ENCODE measurements at regions of chr9 and their contacts with region 1.

Region 1: DNA sequence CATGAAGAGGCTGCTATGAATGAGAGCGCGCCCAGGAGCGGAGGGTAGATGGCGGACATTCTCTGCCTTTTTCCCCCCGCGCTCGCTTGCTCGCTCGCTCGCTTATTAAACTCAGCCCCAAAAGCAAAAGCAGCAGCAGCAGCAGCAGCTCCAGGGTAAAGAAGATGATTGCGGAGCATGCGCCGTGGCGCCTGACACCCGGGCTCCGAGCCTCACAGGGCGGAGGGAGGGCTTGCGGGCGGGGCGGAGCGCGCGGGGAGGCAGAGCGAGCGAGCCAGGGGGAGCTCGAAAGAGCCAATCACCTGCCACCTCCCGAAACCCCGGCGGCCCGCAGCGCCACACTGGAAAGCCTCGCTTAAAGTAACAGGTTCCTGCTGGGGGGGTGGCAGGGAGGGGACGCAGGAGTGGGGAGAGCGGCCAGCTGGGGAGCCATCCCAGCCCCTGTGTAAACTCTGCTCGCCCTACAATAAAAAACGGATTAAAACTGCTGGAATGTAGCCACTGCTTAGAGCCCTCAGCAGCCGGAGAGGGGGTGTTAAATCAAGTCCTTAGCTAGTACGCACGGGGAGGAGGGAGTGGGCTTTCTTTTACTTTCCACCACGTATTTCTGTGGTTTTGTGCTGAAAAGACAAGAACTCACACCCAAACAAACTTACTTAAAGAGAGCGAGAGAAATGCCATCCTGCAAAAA is at the start of gene MLLT3:
- DNase-seq: peak; percentile 96
- H3K4me3 Mint-ChIP-seq: peak within 1 kb of the TSS; percentile 92
- H3K27ac Mint-ChIP-seq: peak within 1 kb of the TSS; percentile 94
- H3K4me1 Mint-ChIP-seq: peaks cover 43% of the 10 kb centered on the region
- H3K27me3 Mint-ChIP-seq: no peaks in the 10 kb centered on the region
- total RNA-seq, gene MLLT3: 22.4 and 24.9 TPM in 2 replicates

Region 2: GRCh38 chr9:19925817-19926503 is 696.5 kb before region 1 on chr9:
- intact Hi-C with region 1: loop called (anchors 2 kb)
- DNase-seq: peak; percentile 74
- H3K4me3 Mint-ChIP-seq: peak overlapping the region; percentile 64
- H3K27ac Mint-ChIP-seq: no peak overlapping the region
- H3K4me1 Mint-ChIP-seq: peaks cover 14% of the 10 kb centered on the region
- H3K27me3 Mint-ChIP-seq: peaks cover 24% of the 10 kb centered on the region

Region 3: DNA sequence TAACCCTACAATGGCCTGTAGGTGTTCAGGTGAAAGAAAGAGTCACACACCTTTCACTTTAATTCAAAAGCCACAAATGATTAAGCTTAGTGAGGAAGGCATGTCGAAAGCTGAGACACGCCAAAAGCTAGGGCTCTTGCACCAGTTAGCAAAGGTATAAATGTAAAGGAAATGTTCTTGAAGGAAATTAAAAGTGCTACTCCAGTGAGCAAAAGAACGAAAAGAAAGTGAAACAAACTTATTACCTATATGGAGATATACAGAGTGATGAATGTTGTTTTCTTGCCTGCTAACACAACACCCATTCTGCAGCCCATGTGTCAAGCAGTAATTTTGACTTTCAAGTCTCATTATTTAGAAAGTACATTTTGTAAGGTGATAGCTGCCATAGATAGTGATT is 579.4 kb before region 1 on chr9:
- intact Hi-C with region 1: loop called (anchors 2 kb)
- DNase-seq: no peak
- H3K4me3 Mint-ChIP-seq: peak overlapping the region; percentile 71
- H3K27ac Mint-ChIP-seq: peak overlapping the region; percentile 70
- H3K4me1 Mint-ChIP-seq: peaks cover 30% of the 10 kb centered on the region
- H3K27me3 Mint-ChIP-seq: peaks cover 2% of the 10 kb centered on the region

Region 4: DNA sequence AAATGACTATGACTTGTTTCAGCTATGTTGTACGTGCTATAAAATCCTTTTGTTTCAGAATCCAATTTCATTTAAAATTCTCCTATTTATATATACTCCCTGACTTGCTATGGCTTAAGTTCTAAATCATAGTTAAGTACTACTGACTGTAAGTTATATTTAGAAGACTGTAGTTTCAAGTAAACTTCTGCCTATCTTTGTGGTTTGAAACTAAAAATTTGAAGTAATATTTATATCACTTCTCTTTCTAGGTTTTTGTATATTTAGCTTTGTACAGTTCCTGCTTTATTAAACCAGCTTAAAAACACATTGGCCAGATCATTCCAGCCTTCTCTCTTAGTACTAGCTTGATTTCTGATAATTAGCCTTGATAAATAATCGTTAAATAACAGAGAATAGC is 196.5 kb before region 1 on chr9:
- intact Hi-C with region 1: loop called (anchors 5 kb)
- DNase-seq: no peak
- H3K4me3 Mint-ChIP-seq: no peak overlapping the region
- H3K27ac Mint-ChIP-seq: no peak overlapping the region
- H3K4me1 Mint-ChIP-seq: peaks cover 3% of the 10 kb centered on the region
- H3K27me3 Mint-ChIP-seq: no peaks in the 10 kb centered on the region

Region 5: DNA sequence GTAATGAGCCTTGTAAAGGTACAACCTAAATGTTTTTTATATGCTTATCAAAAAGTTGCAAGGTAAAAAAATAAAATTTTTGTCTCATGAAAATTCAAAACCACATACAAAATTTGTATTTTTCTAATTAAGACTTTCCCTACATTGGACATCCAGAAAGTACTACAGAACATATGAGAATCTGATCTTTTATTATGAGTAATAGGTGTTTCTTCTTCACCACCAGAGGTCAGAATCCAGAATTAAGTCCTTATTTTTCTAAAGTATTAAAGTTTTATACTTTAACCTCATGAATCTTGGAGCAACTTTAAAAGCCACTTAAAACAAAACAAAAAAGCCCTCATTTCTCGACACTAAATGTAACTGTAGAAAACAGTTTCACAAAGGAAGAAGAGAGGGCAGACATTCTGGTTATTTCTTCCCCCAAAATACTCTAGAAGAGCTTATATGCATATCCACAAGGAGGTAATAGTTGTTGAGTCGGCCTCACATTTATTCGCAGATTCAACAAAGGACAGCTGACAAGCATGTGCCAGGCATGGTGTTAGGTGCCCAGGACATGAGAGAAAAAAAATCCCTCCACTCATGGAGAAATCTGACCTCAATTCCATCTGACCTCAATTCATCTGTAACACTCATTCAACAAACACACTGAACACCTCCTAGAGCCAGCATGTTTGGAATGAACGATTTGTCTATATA is 69.5 kb before region 1 on chr9:
- intact Hi-C with region 1: loop called (anchors 2 kb)
- DNase-seq: no peak
- H3K4me3 Mint-ChIP-seq: peak overlapping the region; percentile 41
- H3K27ac Mint-ChIP-seq: peak overlapping the region; percentile 25
- H3K4me1 Mint-ChIP-seq: peaks cover 67% of the 10 kb centered on the region
- H3K27me3 Mint-ChIP-seq: no peaks in the 10 kb centered on the region

Region 6: DNA sequence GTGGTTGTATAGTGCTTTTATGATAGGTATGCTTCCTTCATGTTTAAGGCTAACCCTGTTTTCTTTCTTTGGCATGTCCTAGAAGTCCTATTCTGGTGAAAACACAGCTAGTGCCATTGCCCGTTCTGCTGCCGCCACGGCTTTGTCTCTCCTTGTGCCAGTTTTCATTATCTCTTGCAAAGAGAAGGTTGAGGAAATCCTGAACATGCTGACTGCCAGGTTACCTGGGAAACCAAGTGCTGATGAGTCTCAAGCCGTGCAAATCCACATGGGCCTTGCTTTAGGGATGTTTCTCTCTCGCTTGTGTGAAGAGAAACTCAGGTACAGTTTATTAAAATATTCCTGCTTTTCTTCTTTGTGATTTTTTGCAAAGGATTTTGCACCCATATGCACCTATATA is 306.8 kb after region 1 on chr9:
- intact Hi-C with region 1: loop called (anchors 1 kb)
- DNase-seq: no peak
- H3K4me3 Mint-ChIP-seq: no peak overlapping the region
- H3K27ac Mint-ChIP-seq: no peak overlapping the region
- H3K4me1 Mint-ChIP-seq: peaks cover 25% of the 10 kb centered on the region
- H3K27me3 Mint-ChIP-seq: no peaks in the 10 kb centered on the region

Region 7: DNA sequence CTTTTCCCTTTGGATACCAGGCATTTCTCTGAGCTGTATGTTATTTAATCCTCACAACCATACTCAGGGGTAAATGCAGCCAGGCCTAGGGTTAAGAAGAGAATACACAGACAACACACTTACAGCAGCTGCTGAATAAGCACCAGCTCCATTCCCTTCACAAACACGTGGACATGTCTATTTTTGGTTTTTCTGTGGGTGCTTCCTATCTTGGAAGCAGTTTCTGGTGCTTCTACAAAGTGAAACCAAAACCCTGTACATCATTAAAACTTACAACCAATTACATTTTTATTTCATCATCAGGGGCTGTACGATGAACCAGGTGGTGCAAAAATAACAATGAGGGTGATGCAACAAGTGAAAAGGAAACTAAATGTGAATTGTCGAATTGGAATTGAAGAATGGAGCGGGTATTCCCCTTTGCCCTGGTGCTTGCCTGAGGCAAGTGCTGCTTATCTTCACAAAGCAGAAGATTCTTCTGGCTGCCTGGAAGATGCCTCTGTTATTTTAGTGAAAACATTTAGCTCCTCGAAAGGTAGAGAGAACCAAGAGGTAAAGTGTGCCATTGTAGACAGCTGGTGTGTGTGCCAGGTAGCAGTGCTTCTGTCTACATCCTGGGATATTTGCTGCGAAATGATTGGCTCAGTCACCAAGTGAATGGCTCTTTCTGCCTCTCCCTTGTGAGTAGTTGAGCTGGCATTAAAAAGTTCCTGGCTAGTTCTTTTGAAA is 473.9 kb after region 1 on chr9:
- intact Hi-C with region 1: loop called (anchors 5 kb)
- DNase-seq: peak; percentile 34
- H3K4me3 Mint-ChIP-seq: peak overlapping the region; percentile 51
- H3K27ac Mint-ChIP-seq: peak overlapping the region; percentile 8
- H3K4me1 Mint-ChIP-seq: peaks cover 33% of the 10 kb centered on the region
- H3K27me3 Mint-ChIP-seq: no peaks in the 10 kb centered on the region

Region 8: GRCh38 chr9:22060831-22061383 is 1438.4 kb after region 1 on chr9:
- intact Hi-C with region 1: no loop called
- DNase-seq: no peak
- H3K4me3 Mint-ChIP-seq: no peak overlapping the region
- H3K27ac Mint-ChIP-seq: no peak overlapping the region
- H3K4me1 Mint-ChIP-seq: peaks cover 31% of the 10 kb centered on the region
- H3K27me3 Mint-ChIP-seq: peaks cover 43% of the 10 kb centered on the region